Left cardiac atrium (tissue), 4 donors: ENCODE measurements at regions of chr2 and their contacts with region 1.

Region 1: DNA sequence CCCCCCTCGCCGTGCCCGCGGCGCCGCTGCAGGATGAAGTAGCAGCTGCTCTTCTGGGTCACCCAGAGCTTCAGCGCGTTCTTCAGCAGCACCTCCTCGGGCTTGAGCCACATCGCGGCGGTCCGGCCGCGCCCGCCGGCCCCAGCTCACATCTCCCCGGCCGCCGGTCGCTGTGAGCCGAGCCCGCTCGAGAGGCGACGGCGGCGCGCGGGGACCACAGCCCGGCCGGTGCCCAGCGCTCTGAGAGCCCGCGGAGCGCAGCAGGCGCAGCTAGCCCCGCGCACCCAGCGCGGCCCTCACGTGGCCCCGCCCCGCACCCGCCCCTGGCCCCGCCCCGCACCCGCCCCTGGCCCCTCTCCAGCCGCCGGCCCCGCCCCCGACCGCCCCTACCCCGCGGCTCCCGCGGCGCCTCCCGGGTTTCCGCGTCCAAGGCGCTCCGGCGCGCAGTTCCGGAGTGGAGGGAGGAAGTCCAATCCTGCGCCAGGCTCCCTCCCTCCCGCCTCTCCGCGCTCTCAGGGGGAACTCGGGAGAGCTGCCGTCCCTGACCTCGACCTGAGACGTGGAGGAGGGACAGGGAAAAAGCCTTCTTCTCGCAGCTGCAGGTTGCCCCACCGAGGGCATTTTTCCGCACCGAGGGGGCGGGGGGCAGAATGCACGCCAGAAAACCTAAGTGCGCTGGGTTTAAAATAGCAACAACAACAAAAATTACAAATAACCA is at the start of gene TBC1D8:
- DNase-seq: peak; percentile 91
- ATAC-seq: peak; percentile 91 to 92
- total RNA-seq, gene TBC1D8: 33.4 to 41.2 TPM

Region 2: GRCh38 chr2:100865816-100866460 is 285.4 kb before region 1 on chr2:
- intact Hi-C with region 1: no loop called
- DNase-seq: no peak
- ATAC-seq: peak in 1 of 2 donors; percentile 75

Region 3: DNA sequence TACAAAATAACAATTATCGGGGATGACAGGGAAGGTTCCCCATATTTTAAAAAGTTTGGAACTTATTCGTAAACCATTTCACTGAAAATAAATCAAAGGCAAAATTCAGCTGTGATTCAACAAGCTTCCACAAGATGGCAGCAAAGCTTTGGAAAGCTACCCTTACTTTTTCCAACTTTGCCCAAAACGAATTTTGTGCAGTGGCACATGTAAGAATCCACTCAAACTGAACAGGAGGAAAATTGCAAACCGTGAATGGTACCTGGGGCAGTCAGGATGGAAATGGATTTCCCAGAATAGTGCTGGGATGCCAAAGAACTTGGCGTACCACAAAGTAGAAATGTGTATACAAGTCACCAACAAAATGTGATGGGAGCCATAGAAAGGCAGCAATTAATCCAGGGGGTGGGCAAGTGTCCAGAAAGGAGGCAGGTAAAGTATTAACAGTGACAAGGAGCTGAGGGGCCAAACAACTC is 138.6 kb before region 1 on chr2:
- intact Hi-C with region 1: loop called (anchors 2 to 5 kb)
- DNase-seq: no peak
- ATAC-seq: peak; percentile 9 to 38

Region 4: GRCh38 chr2:101036562-101037457 is 114.5 kb before region 1 on chr2:
- intact Hi-C with region 1: loop called (anchors 2 to 5 kb)
- DNase-seq: no peak
- ATAC-seq: no peak

Region 5: GRCh38 chr2:101113396-101114267 is 37.7 kb before region 1 on chr2:
- intact Hi-C with region 1: loop called in 1 of 2 experiments (anchors 5 kb)
- DNase-seq: no peak
- ATAC-seq: peak in 1 of 2 donors; percentile 6